Activated B cell treated with CpG ODN at 0.5 μM for 24 hours (primary cell): ENCODE measurements at regions of chr19 and their contacts with region 1.

Region 1: DNA sequence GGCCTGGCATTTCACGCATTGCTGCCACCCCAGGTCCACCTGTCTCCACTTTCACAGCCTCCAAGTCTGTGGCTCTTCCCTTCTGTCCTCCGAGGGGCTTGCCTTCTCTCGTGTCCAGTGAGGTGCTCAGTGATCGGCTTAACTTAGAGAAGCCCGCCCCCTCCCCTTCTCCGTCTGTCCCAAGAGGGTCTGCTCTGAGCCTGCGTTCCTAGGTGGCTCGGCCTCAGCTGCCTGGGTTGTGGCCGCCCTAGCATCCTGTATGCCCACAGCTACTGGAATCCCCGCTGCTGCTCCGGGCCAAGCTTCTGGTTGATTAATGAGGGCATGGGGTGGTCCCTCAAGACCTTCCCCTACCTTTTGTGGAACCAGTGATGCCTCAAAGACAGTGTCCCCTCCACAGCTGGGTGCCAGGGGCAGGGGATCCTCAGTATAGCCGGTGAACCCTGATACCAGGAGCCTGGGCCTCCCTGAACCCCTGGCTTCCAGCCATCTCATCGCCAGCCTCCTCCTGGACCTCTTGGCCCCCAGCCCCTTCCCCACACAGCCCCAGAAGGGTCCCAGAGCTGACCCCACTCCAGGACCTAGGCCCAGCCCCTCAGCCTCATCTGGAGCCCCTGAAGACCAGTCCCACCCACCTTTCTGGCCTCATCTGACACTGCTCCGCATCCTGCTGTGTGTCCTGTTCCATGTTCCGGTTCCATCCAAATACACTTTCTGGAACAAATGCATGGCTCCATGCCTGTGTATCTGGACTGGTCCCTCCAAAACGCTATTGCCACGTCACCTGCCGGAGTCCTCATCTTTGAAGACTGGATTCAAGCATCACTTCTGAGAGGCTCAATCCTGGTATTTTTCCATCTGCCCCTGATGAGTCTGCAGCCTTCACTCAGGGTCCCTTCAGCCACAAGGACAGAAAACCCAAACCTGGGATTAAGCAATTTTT is 10.7 kb upstream of the DHDH start:
- DNase-seq: no peak
- ATAC-seq: no peak
- H3K4me3 Mint-ChIP-seq: no peak overlapping the region
- H3K27ac Mint-ChIP-seq: no peak overlapping the region
- H3K4me1 Mint-ChIP-seq: peaks cover 9% of the 10 kb centered on the region
- H3K27me3 Mint-ChIP-seq: no peaks in the 10 kb centered on the region
- CTCF ChIP-seq: no peak

Region 2: DNA sequence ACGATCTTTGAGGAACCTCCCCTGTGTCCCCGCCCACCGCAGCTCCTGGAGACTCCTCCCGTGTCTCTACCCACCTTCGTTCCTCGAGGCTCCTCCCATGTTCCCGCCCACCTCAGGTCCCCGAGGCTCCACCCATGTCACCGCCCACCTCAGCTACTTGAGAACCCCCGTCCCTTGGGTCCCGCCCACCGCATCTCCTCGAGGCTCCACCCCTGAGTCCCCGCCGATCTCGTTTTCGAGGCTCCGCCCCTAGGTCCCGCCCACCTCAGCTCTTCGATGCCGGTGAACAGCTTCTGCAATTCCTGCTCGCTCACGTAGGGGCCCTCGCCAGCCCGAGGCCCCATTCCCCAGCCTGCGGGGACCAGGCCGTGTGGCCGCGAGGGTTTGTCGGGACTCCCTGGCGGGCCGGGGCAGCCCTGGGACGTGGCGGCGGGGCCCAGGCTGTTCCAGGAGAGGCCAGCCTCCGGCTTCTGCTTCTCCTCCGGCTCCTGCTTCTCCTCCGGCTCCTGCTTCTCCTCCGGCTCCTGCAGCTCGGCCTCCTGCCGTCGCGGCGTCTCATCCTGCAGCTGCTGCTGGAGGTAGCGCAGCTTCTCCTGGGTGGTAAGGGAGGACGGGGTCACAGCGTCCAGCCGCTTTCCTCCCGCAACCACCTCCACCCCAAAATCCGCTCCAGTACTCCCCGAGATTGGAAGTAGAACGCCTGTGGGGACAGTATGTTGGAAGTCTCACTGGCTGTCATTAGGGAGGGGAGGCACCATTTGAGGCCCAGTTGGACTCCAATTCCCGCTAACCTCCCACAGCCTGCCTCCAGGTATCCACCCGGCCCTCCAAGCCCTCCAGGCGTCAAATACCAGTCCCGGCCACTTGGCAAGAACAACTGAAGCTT is 823.6 kb after region 1 on chr19:
- CTCF ChIA-PET with region 1: no interaction called
- POLR2A ChIA-PET with region 1: interaction called, 10 read pairs
- intact Hi-C with region 1: no loop called
- DNase-seq: peak; percentile 27
- ATAC-seq: peak; percentile 84
- H3K4me3 Mint-ChIP-seq: no peak overlapping the region
- H3K27ac Mint-ChIP-seq: no peak overlapping the region
- H3K4me1 Mint-ChIP-seq: no peaks in the 10 kb centered on the region
- H3K27me3 Mint-ChIP-seq: peaks cover 4% of the 10 kb centered on the region
- CTCF ChIP-seq: no peak